ENCODE measurements at regions of chr5 and their contacts with region 1.

Region 1: GRCh38 chr5:136080483-136081216 is 51.9 kb downstream of the TGFBI start:
- DNase-seq: no peak
- H3K4me3 ChIP-seq: no peak overlapping the region
- H3K27ac ChIP-seq: no peak overlapping the region
- H3K4me1 ChIP-seq: no peaks in the 10 kb centered on the region; a peak in 1 of 4 replicates
- H3K27me3 ChIP-seq: no peaks in the 10 kb centered on the region
- CTCF ChIP-seq: no peak
- EP300 ChIP-seq: no peak
- RAD21 ChIP-seq: no peak

Region 2: DNA sequence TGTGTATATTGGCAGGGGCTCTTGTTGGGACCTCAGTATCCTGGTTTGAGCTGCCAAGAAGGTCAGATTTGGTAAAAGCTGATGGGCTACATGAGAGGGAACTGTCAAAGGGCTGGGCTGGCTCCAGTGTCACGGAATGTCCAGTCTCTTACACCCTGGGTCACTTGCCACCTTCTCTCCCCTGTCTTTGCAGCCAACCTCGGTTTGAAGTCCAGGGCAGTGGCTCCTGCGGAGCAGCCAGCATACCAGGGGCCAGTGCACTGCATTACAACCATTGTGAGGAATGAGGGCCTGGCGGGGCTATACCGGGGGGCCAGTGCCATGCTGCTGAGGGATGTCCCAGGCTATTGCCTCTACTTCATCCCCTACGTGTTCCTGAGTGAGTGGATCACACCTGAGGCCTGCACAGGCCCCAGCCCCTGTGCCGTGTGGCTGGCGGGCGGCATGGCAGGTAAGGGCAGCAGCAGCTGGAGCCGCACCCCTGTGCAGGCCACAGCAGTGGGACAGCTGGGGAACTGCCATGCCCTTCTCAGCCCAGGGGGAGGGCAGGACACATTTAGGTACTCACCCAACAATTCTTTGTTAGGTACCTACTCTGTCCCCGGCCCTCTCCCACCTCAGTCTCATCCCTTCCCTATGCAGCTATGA is 209.3 kb before region 1 on chr5:
- CTCF ChIA-PET with region 1: no interaction called
- POLR2A ChIA-PET with region 1: no interaction called
- DNase-seq: no peak
- H3K4me3 ChIP-seq: no peak overlapping the region
- H3K27ac ChIP-seq: no peak overlapping the region
- H3K4me1 ChIP-seq: no peaks in the 10 kb centered on the region
- H3K27me3 ChIP-seq: no peaks in the 10 kb centered on the region
- CTCF ChIP-seq: no peak
- EP300 ChIP-seq: no peak
- RAD21 ChIP-seq: no peak

Region 3: DNA sequence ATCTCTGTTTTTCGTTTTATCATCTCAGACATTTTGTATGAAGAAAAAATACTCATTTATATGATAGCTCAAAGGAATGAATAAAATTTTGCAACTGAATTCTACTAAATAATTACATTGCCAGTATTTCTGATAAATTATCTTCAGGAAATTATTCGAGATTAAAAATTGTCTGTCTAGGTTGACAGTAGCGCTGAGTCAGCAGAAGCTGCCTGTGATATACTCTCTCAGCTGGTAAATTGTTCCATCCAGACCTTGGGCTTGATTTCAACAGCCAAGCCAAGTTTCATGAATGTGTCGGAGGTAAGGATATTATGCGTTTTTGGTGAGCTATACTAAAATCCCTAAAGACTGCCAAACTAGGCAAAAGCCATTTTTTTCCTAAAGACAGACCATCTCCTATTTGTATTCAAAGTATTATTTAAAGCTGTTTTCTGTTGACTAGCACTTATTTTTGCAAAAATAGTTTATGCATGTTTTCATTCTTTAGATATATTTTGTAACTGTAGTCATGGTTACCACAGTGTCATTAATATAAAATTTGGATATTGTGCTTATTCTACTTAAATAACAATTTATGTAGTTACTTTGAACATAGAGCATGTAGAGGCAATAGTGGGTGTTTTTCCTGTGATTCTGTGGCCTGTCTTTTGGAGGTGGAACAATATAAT is 143.3 kb before region 1 on chr5:
- CTCF ChIA-PET with region 1: interaction called, 20 read pairs
- POLR2A ChIA-PET with region 1: no interaction called
- DNase-seq: no peak
- H3K4me3 ChIP-seq: no peak overlapping the region
- H3K27ac ChIP-seq: no peak overlapping the region
- H3K4me1 ChIP-seq: no peaks in the 10 kb centered on the region; a peak in 1 of 4 replicates
- H3K27me3 ChIP-seq: no peaks in the 10 kb centered on the region
- CTCF ChIP-seq: no peak
- EP300 ChIP-seq: no peak
- RAD21 ChIP-seq: no peak

Region 4: DNA sequence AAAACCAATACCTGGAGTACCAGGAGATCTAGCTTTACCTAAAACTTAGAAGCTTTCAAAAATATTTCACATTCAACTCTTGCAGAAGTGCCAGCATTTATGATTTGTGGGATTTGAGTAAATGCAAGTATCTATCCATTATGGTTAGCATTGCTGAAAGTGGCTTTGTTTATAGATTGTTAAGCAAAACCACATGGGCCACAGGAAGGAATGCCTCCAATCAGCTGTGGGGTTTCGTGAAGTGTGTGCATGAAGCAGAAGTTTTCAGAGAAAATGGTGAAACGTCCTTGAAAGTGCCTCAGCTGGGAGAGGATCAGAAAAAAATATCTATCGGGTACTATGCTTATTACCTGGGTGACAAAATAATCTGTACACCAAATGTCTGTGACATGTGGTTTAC is 130.0 kb before region 1 on chr5:
- CTCF ChIA-PET with region 1: interaction called, 73 read pairs
- POLR2A ChIA-PET with region 1: no interaction called
- DNase-seq: no peak
- H3K4me3 ChIP-seq: no peak overlapping the region
- H3K27ac ChIP-seq: no peak overlapping the region; a peak in 1 of 4 replicates
- H3K4me1 ChIP-seq: no peaks in the 10 kb centered on the region
- H3K27me3 ChIP-seq: no peaks in the 10 kb centered on the region
- CTCF ChIP-seq: no peak
- EP300 ChIP-seq: no peak
- RAD21 ChIP-seq: no peak

Region 5: GRCh38 chr5:136037001-136037705 is 43.5 kb before region 1 on chr5:
- CTCF ChIA-PET with region 1: interaction called, 10 read pairs
- POLR2A ChIA-PET with region 1: no interaction called
- DNase-seq: no peak
- H3K4me3 ChIP-seq: no peak overlapping the region
- H3K27ac ChIP-seq: peak overlapping the region; percentile 61 to 72
- H3K4me1 ChIP-seq: peaks cover 33 to 53% of the 10 kb centered on the region in 2 experiments
- H3K27me3 ChIP-seq: no peaks in the 10 kb centered on the region
- CTCF ChIP-seq: no peak
- EP300 ChIP-seq: 0 out of 4 replicates have a peak, but pooled peaks of 1 of the 2 experiments have one; percentile 15
- RAD21 ChIP-seq: no peak

Region 6: GRCh38 chr5:136124393-136124792 is 43.7 kb after region 1 on chr5:
- CTCF ChIA-PET with region 1: interaction called, 15 read pairs
- POLR2A ChIA-PET with region 1: no interaction called
- DNase-seq: no peak
- H3K4me3 ChIP-seq: no peak overlapping the region
- H3K27ac ChIP-seq: no peak overlapping the region
- H3K4me1 ChIP-seq: no peaks in the 10 kb centered on the region; a peak in 1 of 4 replicates
- H3K27me3 ChIP-seq: no peaks in the 10 kb centered on the region; the same call in 1 of the 2 replicates
- CTCF ChIP-seq: no peak
- EP300 ChIP-seq: no peak
- RAD21 ChIP-seq: no peak

Measured in SK-N-SH (cell line).